Prostate gland (tissue), 2 donors: ENCODE measurements at regions of chrX and their contacts with region 1.

Region 1: DNA sequence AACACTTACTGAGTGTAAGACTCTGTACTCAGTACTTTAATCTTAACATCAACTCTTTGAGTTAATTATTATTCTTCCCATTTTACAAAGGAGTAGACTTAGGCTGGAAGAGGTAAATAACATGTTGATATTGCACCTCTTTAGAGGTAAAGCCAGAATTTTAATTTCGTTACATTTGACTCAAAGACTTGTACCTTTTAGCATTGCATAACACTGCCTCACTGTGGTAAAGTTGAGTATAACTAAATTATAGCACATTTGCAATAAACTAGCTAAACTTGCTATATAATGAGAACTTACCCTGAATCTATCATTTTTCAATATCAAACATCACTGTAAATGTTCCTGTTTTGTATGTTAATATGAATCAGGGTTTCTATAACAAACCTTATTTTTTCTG is 218.5 kb downstream of the PRR32 start:
- DNase-seq: no peak
- H3K4me3 ChIP-seq: no peak overlapping the region
- H3K27ac ChIP-seq: no peak overlapping the region
- H3K4me1 ChIP-seq: no peaks in the 10 kb centered on the region
- H3K27me3 ChIP-seq: no peaks in the 10 kb centered on the region
- CTCF ChIP-seq: peak in 1 of 4 experiments; percentile 6
- POLR2A ChIP-seq: no peak

Region 2: DNA sequence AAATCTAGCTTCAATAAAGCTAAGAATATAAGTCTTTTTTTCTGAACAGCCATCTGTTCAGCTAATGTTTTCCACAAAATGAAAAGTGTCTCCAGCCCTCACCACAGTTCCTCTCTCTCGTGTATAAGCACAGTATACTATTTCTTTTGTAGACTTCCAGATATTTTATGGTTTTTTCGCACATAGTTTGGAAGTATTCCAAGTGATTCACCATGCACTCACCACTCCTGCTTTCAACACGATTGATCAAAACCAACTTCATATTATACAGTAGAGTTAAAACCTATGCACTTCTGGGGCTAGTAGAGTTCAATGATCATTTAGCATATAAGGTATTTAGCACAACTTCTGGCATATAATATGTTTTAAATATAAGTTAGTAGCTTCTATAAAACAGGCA is 379.6 kb before region 1 on chrX:
- intact Hi-C with region 1: no loop called
- DNase-seq: no peak
- H3K4me3 ChIP-seq: no peak overlapping the region
- H3K27ac ChIP-seq: no peak overlapping the region
- H3K4me1 ChIP-seq: no peaks in the 10 kb centered on the region
- H3K27me3 ChIP-seq: no peaks in the 10 kb centered on the region
- CTCF ChIP-seq: no peak
- POLR2A ChIP-seq: no peak

Region 3: GRCh38 chrX:126770194-126770593 is 267.9 kb before region 1 on chrX:
- intact Hi-C with region 1: loop called (anchors 5 kb)
- DNase-seq: no peak
- H3K4me3 ChIP-seq: no peak overlapping the region
- H3K27ac ChIP-seq: no peak overlapping the region
- H3K4me1 ChIP-seq: no peaks in the 10 kb centered on the region
- H3K27me3 ChIP-seq: no peaks in the 10 kb centered on the region
- CTCF ChIP-seq: peak in 2 of 4 experiments; percentile 6 to 30
- POLR2A ChIP-seq: no peak